AG04449 (cell line): ENCODE measurements at regions of chr2 and their contacts with region 1.

Region 1: DNA sequence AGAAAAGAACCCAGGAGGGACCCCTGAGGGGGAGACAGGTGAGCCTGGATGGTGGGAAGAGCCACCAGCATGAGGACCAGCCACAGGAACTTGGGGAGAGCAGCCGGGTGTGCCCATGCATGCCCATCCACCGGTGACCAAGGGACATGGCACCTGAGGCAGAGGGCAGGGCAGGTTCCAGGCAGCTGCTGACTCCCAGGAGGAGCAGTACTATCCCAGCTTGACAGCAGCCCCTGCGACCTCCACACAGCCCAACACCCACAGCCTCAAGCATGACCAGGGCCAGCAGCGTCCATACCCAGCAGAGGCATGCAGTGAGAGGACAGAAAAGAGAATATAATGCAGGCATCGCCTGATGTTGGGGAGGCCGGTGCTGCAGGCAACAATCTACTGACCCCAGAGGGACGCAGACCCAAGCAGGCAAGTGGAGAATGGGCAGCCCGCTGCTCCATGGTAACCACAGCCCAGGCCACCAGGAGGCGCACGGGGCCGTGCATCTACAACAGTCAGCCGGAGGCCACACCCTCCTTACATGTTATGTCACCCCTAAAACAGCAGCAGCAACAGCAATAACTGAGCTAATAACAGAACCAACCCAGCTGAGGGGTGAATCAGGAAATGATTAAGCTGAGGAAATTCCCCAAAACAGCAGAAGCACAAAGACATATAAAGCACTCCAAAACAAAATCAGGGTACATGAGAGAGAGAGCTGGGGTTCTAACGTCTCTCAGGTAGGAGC is 44.1 kb downstream of the ANKMY1 start:
- DNase-seq: peak; percentile 47
- H3K4me3 ChIP-seq: no peak overlapping the region
- CTCF ChIP-seq: peak; percentile 93

Region 2: DNA sequence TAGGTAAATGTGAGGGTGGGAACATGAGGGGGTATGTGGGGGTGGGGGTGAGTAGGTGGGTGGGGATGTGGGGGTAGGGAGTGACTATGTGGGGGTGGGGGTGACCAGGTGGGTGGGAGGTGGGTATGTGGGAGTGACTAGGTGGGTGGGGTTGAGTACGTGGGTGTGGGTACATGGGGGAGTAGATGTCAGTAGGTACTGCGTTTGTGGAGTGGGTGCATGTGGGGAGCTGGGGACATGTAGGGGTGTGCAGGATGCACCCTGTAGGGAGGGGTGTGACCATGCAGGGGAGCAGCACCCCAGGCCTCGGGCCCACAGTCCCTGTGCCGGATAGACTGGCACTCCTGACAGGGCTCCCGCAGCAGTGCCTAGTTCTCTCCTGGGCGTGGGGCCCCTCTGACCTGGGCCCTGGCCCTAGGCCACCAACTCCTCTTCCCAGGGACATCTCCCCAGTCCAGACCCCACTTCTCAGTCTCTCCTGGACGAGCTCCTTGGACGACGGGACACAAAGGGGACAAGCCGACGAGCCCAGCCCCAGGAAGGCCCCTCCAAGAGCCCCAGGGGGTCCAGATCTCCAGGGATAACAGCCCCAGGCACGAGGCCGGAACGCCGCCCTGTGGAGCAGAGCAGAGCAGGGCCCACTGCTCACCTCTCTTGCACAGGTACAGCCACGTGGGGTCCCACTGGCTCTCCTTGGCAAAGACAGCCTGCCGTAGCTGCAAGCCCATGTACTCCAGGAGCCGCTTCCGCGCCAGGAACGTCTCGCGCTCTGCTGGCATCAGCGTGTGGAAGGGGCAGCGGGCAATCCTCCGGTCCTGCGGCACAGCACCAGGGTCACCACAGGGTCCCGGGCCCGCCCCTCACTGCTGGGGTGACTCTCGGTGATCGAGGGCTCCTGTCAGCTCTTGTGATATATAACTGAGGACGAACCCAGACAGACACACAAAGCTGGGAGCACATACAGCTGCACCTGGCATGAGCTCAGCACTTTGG is 14.1 kb before region 1 on chr2:
- CTCF ChIA-PET with region 1: interaction called, 28 read pairs
- POLR2A ChIA-PET with region 1: interaction called, 4 read pairs
- DNase-seq: no peak
- H3K4me3 ChIP-seq: no peak overlapping the region
- CTCF ChIP-seq: no peak

Region 3: DNA sequence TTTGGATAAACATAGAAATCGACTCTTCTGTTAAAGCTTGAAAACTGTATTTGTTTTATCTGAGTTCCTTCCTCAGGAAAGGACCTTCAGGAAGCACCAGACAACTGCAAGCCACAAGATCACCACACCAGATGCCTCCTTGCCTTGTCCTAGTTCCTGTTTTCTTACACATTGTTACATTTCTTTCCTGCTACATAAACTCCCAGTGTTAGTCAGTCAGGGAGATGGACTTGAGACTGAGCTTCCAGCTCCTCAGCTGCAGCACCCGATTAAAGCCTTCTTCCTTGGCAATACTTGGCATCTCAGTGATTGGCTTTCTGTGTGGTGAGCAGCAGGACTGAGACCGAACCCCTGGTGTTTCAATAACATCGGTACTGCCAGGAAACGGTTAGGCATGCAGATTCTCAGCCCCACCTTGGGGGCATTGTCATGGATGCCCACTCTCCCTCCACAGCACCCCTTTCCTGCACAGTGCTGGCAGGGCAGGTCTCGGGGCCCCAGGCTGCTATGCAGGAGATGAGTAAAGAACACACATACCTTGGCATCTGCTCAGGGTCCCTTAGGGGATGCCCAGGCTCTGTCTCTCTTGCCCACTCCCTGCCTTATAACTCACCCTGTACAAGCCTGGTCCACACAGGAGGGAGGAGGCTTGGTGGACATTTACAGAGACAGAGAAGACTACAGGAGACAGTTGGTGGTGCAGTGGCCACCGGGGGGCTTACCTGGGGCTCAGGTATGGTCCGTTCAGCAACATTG is 11.4 kb after region 1 on chr2:
- CTCF ChIA-PET with region 1: interaction called, 29 read pairs
- POLR2A ChIA-PET with region 1: no interaction called
- DNase-seq: no peak
- H3K4me3 ChIP-seq: no peak overlapping the region
- CTCF ChIP-seq: no peak

Region 4: DNA sequence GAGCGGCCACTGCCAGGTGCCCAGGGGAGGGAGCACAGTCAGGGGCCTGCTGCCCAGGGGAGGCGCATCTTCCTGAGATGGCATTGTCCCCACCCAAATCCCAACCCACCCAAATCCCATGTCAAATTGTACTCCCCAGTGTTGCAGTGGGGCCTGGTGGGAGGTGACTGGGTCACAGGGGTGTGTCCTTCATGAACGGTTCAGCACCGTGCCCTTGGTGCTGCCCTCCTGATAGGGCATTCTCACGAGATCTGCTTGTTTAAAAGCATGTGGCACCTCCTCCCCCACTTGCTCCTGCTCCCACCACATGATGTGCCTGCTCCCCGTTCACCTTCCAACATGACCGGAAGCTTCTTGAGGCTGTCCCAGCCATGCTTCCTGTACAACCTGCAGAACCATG is 16.5 kb after region 1 on chr2:
- CTCF ChIA-PET with region 1: interaction called, 29 read pairs
- POLR2A ChIA-PET with region 1: no interaction called
- DNase-seq: no peak
- H3K4me3 ChIP-seq: no peak overlapping the region
- CTCF ChIP-seq: no peak

Region 5: GRCh38 chr2:240566203-240567136 is 52.8 kb after region 1 on chr2:
- CTCF ChIA-PET with region 1: interaction called, 25 read pairs
- POLR2A ChIA-PET with region 1: no interaction called
- DNase-seq: no peak
- H3K4me3 ChIP-seq: peak overlapping the region; percentile 44
- CTCF ChIP-seq: peak; percentile 81

Region 6: DNA sequence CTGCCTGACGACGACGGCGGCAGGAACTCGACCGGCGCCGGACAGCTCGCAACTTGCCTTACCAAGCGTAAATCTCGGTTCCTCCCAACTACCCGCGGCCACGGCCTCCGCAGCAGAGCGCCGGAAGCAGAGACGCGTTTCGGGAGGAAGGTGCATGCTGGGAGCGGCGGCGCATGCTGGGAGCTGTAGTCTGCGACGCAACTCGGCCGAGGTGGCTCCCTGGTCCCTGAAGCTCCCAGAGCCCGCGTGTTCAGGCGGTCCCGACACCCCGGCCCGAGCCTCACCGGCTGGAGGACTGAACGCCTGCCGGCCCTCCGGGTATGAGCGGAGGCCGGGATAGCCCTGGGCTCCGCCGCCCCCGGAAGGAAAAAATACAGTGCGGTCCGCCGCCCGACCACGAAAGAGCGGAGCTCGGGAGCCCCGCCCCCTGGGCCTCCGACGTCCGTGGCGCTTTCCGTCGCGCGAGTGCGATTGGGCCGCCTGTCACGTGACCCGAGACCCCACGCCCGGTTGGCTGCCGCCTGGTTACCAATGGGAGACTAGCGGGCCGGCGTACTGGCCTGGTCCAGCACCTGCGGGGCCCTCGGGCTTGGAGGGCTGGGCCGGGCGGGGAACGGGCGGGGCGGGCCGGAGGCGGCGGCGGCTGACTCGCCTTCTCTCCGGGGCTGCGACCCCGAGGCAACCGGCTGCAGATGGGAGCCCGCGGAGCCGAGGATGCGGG is 72.6 kb after region 1 on chr2 and contains the start of gene CAPN10:
- CTCF ChIA-PET with region 1: interaction called, 15 read pairs
- POLR2A ChIA-PET with region 1: no interaction called
- DNase-seq: peak; percentile 47
- H3K4me3 ChIP-seq: peak within 1 kb of the TSS; percentile 72
- CTCF ChIP-seq: no peak

Region 7: GRCh38 chr2:240840435-240841080 is 326.8 kb after region 1 on chr2:
- CTCF ChIA-PET with region 1: interaction called, 98 read pairs
- POLR2A ChIA-PET with region 1: no interaction called
- DNase-seq: no peak
- H3K4me3 ChIP-seq: no peak overlapping the region
- CTCF ChIP-seq: peak; percentile 69